Pancreas (tissue), 10 donors: ENCODE measurements at regions of chr10 and their contacts with region 1.

Region 1: DNA sequence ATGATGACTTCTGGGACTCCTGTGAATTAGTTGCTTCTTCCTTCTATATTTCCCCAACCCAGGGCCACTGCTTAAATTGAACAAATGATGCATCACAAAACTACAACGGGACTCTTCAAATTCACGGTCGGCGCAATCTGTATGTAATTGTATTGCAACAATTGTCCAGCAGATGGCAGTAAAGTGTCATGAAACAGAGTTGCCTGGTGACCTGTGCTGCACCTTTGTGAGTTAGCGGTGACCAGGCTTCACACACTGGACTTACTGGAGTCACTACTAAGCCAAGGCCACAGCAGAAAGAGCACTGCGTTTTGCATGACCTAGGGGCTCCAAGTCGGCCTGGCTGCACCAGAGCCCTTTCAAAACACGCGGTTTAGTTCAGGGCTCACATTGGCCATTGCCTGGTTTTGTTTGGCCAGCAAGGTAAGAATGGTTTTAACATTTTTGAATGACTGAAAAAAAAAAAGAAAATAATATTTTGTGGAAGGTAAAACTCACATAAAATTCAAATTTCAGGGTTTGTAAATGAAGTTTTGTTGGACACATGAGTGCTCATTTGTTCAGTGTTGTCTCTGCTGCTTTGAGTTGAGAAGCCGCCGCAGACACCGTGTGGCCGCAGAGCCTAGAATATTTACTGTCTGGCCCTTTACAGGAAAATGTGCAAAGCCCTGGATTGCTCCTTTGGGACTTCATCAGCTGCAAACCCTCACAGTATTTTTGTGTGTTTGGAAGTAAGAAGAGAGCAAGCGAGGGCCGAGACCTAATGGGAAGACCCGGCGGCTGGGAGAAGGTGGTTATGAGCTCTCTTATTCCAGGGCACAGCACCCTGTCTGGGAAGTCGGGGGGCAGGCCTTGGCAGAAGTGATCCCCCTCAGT is 23.2 kb upstream of the ZNF32 start:
- DNase-seq: peak in 4 of 6 donors; percentile 55 to 74 (median 60)
- ATAC-seq: peak; percentile 87 to 96 (median 92)
- H3K4me3 ChIP-seq: no peak overlapping the region
- H3K27ac ChIP-seq: no peak overlapping the region
- H3K4me1 ChIP-seq: no peaks in the 10 kb centered on the region
- H3K27me3 ChIP-seq: peaks cover 0 to 3% (median 0%) of the 10 kb centered on the region in 4 donors
- CTCF ChIP-seq: peak; percentile 66 to 79 (median 74)

Region 2: DNA sequence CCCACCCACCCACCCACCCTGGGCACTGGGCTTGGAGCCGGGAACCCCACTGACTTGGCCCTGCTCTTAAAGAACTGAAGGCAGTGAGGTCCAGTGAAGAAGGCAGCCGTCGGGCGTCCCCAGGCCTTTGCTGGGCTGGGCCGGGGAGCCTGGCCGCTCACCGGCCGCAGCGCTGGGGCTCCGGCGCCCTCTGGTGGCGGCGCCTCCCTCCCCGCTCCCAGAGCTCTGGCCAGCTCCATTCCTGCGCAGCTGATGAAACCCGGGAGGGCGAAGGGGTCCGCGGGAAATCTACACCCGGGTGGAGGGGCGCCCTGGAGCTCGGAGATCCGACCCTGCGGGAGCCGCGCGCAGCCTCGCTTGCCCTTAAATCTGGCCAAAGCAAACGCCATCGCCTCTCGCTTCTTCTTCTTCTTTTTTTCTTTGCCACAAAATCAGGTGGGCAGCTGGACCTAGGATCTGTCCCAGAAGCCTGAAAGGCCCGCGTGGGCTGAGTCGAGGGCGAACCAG is 714.7 kb after region 1 on chr10:
- intact Hi-C with region 1: loop called in 2 of 3 experiments (anchors 5 kb)
- DNase-seq: peak; percentile 51 to 92 (median 79)
- ATAC-seq: peak; percentile 68 to 87 (median 75)
- H3K4me3 ChIP-seq: no peak overlapping the region
- H3K27ac ChIP-seq: no peak overlapping the region
- H3K4me1 ChIP-seq: peaks cover 0 to 8% (median 0%) of the 10 kb centered on the region in 3 donors
- H3K27me3 ChIP-seq: no peaks in the 10 kb centered on the region
- CTCF ChIP-seq: peak; percentile 84 to 92 (median 88)

Region 3: DNA sequence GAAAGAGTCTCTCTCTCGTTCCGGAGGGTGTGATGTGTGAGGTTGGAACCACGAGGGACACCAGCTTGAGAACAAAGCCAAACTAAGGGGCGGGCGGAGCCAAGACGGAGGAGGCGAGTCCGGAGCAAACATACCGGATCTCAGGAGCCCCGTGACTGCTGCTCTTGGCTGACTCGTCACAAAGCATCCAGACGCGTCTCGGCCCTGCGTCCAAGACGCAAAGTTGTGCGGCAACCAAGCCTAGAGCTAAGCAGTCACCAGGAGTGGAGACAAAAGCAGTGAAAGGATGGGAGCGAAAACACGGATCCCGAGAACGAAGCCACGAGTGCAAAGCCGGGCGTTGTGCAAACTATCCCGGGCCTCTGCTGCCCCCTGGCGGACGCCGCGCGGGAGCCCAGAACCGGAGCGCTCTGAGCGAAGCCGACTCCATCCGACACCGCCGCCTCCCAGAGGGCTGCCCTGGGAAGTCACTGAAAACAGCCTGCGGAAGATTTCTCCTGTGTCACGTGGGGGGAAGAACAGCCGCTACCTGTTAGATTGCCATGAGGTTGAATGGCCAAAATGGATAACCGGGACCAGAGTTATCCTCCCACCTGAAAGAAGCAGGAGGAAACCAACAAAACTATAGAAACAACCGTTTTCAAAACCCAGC is 1192.9 kb after region 1 on chr10:
- intact Hi-C with region 1: loop called in 2 of 3 experiments (anchors 5 kb)
- DNase-seq: peak; percentile 87 to 100 (median 96)
- ATAC-seq: peak; percentile 94 to 97 (median 96)
- H3K4me3 ChIP-seq: peak overlapping the region; percentile 5 to 48 (median 30)
- H3K27ac ChIP-seq: peak overlapping the region in 3 of 4 donors; percentile 56 to 75 (median 71)
- H3K4me1 ChIP-seq: peaks cover 0 to 5% (median 4%) of the 10 kb centered on the region in 3 donors
- H3K27me3 ChIP-seq: no peaks in the 10 kb centered on the region
- CTCF ChIP-seq: peak; percentile 95 to 98 (median 98)